Left cardiac atrium (tissue), 4 donors: ENCODE measurements at regions of chr6 and their contacts with region 1.

Region 1: GRCh38 chr6:152552616-152553209 is 84.4 kb downstream of the SYNE1 start:
- DNase-seq: peak; percentile 66
- ATAC-seq: peak; percentile 82 to 95

Region 2: DNA sequence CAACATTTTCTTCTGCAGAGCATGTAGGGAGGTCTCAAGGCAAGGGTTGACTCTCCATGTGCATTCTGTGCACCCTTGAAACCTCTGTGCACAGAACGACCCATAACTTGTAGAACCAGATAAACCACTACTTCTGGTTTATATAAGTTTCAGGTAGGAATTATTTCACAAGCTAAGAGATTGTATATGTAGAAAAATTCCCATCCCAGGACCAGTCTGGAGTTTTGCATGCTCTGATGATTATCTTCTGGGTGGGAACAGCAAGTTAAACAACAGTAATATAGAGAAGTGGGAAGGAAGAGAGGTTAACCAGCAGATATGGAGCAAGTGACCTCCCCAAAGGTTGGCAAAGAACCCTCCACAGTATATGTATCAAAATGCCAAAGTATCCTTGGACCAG is 20.1 kb before region 1 on chr6:
- intact Hi-C with region 1: no loop called
- DNase-seq: no peak
- ATAC-seq: no peak

Region 3: DNA sequence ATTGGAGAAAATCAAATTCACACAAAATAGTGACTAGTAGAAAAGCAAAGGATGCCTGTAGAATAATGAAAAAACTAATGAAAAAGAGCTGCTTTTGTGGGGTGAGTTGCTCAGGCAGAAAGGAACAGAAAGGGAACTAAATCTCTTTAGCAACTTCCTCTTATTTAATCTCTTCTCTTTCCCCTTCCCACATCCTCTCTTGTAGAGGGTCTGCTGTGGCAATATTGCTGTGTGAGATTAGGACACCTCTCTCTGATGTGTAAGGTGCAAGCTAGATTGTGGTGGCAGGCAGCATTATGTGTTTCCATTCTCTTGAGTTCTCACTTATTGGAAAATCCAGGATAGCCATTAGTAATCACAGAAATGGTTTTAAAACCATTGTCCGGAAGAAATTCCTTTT is 34.8 kb after region 1 on chr6:
- intact Hi-C with region 1: no loop called
- DNase-seq: no peak
- ATAC-seq: no peak

Region 4: GRCh38 chr6:152642989-152643388 is 90.3 kb after region 1 on chr6:
- intact Hi-C with region 1: loop called (anchors 2 to 10 kb)
- DNase-seq: peak; percentile 69
- ATAC-seq: peak; percentile 89 to 98

Region 5: GRCh38 chr6:152765331-152765730 is 212.6 kb after region 1 on chr6:
- intact Hi-C with region 1: no loop called
- DNase-seq: no peak
- ATAC-seq: no peak

Region 6: DNA sequence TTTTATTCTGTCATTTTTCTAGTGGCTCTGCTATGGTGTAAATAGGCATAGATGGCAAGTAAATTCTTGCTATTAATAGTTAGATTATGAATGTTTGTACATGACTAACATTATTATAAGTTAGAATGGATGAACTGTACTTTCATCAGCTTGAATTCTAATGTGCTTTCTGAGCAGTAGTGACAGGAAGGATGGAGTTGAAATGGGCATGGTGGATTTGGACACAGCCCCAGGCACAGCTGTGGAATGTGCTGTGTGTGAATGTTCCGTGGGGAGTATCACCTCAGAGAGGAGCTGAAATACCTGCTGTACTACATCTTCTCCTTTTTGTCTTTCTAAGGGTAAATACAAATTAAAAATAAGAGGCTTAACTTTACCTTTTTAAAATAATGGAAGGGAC is 363.3 kb after region 1 on chr6:
- intact Hi-C with region 1: no loop called
- DNase-seq: no peak
- ATAC-seq: no peak

Region 7: DNA sequence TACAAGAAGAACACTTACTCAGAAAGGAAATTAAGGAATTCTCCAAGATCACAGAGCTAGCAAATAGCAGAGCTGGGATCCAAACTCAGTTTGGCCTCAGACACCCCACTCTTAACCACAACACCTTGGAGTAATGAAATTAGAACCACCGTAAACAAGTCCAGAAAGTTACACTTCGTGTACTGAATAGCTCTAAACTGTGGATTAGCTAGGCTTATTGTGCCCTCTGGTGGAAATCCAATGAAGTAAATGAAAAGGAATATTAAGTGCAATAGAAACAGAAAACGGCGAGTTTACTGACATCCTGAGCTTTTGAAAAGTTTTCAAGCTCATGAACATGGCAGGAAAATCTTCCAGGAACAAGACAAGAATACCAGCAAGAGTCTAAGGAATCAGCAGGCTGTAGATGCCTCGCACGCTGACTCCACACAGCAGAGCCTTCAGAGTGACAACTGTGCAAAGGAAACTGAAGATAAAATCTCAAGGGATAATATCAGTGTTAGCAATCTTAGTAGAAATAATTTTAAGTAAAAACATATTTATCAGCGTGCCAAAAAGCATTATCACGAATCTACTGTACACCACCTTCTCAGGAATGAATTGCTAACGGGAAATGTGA is 395.5 kb after region 1 on chr6:
- intact Hi-C with region 1: loop called in 1 of 2 experiments (anchors 5 kb)
- DNase-seq: no peak
- ATAC-seq: peak; percentile 57 to 69